Panc1 (cell line): ENCODE measurements at regions of chr5 and their contacts with region 1.

Region 1: DNA sequence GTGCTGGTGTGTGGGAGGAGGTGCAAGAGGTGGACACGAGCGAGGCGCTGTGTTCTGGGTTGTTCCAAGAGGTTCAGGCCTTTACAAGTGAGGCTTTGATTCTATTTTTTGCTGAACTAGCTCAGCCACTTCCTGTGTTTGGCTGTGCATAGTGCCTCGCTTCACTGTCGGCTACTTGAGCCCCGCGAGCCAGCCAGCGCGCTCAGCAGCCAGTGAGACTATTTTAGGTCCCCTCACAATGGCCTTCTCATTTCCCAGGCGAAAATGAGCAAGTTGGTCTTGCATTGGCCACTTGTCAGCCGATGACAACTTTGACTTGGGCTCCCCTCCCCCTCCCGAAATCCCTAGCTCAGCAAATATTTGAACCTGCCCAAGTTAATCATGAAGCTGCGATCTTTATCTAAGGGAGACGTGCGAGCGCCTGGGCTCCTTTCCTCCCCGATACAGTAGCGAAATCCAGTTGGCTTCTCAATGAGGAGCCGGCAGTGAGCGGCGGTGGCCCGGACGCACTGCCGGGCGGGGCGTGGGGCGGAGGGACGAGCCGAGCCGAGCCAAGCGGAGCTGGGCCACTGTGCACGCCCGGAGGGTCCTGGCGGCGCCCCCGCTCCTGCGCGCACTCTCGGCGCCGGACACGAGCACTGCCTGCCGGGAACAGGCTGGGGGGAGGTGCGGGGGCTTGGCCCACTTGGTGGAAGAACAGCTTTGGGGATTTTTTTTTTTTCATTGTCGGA is 72.6 kb downstream of the PIK3R1 start:
- DNase-seq: no peak
- ATAC-seq: peak; percentile 87
- H3K4me3 ChIP-seq: peak overlapping the region; percentile 59 to 74
- H3K27ac ChIP-seq: peak overlapping the region; percentile 79
- H3K4me1 ChIP-seq: peaks cover 16% of the 10 kb centered on the region
- H3K27me3 ChIP-seq: no peaks in the 10 kb centered on the region
- CTCF ChIP-seq: no peak

Region 2: DNA sequence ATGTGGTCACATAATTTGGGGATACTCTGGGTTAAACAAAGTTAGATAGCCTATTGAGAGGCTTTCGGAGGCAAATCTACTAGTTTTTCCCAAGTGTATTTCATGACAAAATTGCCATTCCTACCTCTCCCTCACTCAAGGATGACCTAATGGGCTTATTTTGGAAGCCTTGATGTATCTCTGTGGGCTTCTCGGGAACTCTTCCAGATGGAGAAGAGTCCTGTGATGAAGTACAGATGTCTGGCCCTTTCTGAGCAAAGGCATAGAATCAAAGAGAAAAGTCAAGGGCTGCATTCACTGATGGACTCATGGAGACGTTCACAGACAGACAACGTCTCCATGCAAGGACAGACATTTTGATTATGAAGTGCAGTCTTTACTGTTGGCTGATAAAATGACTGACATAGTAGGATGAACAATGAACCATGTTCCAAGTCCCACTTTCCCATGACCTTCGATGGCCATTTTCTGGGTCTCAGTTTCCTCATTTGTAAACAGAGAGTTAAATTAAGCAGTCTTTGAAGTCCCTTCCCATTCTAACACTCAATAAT is 744.3 kb before region 1 on chr5:
- CTCF ChIA-PET with region 1: no interaction called
- POLR2A ChIA-PET with region 1: no interaction called
- in situ Hi-C with region 1: no loop called
- intact Hi-C with region 1: no loop called
- DNase-seq: no peak
- ATAC-seq: no peak
- H3K4me3 ChIP-seq: no peak overlapping the region
- H3K27ac ChIP-seq: no peak overlapping the region
- H3K4me1 ChIP-seq: no peaks in the 10 kb centered on the region
- H3K27me3 ChIP-seq: no peaks in the 10 kb centered on the region
- CTCF ChIP-seq: no peak

Region 3: DNA sequence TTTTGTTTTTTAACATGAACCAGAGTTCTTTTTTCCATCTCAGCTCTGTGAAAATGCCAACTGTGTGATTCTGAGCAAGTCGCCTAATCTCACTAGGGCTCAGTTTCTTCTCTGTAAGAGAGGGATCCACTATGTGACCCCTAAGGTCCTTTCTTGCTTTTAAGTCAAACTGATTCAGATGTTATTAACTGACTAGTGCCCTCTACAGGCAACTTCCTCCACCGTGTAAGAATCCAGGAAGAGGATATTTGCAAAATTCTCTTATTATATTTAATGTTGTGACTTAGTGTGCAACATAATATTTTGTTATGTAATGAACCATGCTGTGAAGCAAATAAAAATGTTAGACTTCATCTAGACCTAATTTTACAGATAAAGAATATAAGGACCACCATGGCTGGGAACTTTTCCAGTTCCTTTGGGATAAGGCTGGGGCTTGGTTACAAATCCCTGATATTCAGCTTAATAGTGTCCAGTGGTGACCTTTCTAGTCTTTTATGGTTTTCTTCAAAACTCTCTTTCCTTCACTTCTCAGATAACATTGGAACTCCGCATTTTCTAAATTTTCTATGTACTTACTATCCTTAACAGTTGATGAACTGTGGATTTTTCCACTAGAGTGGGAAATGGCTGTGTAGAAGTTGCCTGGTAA is 172.1 kb after region 1 on chr5:
- CTCF ChIA-PET with region 1: no interaction called
- POLR2A ChIA-PET with region 1: no interaction called
- in situ Hi-C with region 1: no loop called
- intact Hi-C with region 1: loop called (anchors 5 kb)
- DNase-seq: peak; percentile 20
- ATAC-seq: no peak
- H3K4me3 ChIP-seq: no peak overlapping the region
- H3K27ac ChIP-seq: no peak overlapping the region
- H3K4me1 ChIP-seq: no peaks in the 10 kb centered on the region
- H3K27me3 ChIP-seq: no peaks in the 10 kb centered on the region
- CTCF ChIP-seq: peak; percentile 66; the same call in 1 of the 2 replicates

Region 4: GRCh38 chr5:68962757-68963484 is 674.8 kb after region 1 on chr5:
- CTCF ChIA-PET with region 1: interaction called, 4 read pairs
- POLR2A ChIA-PET with region 1: no interaction called
- in situ Hi-C with region 1: no loop called
- intact Hi-C with region 1: loop called (anchors 5 kb)
- DNase-seq: peak; percentile 52
- ATAC-seq: peak; percentile 95
- H3K4me3 ChIP-seq: no peak overlapping the region
- H3K27ac ChIP-seq: no peak overlapping the region
- H3K4me1 ChIP-seq: no peaks in the 10 kb centered on the region
- H3K27me3 ChIP-seq: no peaks in the 10 kb centered on the region
- CTCF ChIP-seq: peak; percentile 94